ENCODE measurements at regions of chr22 and their contacts with region 1.

Region 1: DNA sequence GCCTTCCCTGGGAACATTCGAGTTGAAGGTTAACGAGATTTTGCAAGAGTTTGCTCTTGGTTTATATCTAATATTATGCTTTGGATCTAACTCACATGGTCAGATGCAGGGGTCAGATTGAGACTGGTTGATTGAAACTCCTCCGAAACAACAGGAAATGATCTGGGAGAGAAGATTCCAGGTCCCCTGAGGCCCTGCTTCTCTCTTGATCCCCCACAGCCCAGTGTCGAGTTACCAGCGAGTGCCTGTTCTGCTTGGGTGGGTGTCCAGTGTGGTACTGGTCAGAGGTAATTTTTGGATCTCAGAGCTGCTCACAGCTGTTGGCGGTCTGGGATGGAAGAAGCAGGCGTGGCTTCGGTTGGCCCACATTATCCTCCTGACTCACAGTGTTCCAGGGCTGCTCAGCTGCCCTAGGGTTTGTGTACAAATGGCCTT is 9.2 kb downstream of the FBLN1 start:
- DNase-seq: peak; percentile 88
- H3K4me3 ChIP-seq: no peak overlapping the region
- H3K27ac ChIP-seq: peak overlapping the region; percentile 87
- H3K27me3 ChIP-seq: no peaks in the 10 kb centered on the region
- CTCF ChIP-seq: no peak

Region 2: DNA sequence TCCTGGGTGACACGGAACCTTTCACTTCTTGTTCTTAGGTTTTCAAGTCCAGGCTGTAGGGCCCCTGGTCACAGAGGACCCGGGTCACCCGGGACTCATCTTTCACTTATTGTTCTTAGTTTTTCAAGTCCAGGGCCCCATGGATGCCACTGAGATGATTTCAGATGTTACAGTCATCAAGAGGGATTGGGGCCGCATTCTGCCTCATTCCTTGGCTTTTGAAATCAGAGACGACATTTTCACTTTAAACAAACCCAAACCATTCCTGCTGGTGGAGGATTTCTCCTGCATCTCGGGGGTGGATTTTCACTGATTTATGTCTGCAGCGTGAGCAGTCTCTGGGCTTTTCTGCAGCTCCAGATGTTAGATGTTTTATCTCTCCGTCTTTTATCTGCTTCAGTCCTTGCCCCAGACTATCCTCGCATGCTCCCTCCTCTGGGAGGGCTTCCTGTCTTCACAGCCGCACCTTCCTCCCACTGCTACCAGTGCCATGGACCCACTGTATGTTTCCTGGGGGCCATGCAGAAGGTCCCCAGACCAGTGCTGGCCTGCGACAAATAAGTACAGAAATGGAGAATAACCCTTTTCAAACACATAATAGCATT is 18.2 kb after region 1 on chr22:
- CTCF ChIA-PET with region 1: interaction called, 4 read pairs
- POLR2A ChIA-PET with region 1: interaction called, 10 read pairs
- DNase-seq: peak; percentile 88
- H3K4me3 ChIP-seq: no peak overlapping the region
- H3K27ac ChIP-seq: peak overlapping the region; percentile 97
- H3K27me3 ChIP-seq: no peaks in the 10 kb centered on the region
- CTCF ChIP-seq: no peak

Region 3: DNA sequence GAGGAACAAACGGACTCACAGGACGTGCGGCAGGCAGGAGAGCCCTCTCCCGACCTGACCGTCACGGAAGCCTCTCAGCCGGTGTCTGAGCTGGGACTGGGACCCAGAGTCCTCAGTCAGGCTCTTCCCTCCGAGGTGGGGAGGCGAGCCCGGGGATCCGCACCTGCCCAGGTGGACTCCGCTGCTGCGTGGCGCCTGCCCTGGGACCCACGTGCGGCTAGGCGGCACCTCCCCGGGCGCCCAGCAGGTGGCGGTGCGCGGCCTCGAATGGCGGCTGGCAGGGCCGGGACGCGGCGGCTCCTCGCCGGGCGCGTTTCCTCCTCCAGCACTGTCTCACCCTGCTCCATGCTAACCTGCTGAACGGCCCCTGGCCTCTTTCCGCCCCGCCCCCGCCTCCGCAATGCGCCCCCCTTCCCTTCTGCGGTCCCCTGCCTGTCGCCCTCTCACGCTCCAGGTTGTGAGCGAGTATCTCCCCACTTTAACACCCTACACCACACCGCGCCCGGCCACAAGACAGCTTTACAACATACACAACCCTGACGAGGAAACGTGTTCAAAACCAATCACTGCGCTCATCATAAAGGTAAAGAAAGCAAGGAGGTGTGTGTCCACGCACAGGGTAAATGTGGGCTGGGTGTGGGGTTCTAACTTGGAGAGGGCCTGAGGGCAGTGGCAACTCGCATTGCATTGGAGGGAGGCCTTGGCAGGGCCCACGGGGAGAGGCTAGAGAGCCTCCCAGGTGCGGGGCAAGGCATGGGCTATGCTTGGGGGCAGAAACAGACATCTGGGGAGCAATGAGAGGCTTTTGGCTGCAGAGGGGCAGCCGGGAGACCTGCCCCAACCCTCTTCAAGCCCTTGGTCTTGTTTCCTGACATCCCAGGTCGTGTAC is 133.9 kb after region 1 on chr22:
- CTCF ChIA-PET with region 1: no interaction called
- POLR2A ChIA-PET with region 1: no interaction called
- DNase-seq: no peak
- H3K4me3 ChIP-seq: peak overlapping the region; percentile 38; the same call in 1 of the 2 replicates
- H3K27ac ChIP-seq: no peak overlapping the region
- H3K27me3 ChIP-seq: peaks cover 15% of the 10 kb centered on the region
- CTCF ChIP-seq: peak; percentile 72

Measured in AG04450 (cell line).